ENCODE measurements at regions of chr12 and their contacts with region 1.

Region 1: GRCh38 chr12:108856428-108857157 is 790 bp downstream of the SSH1 start:
- DNase-seq: peak; percentile 77 to 93
- H3K4me3 ChIP-seq: peak overlapping the region; percentile 69 to 86
- H3K27ac ChIP-seq: peak overlapping the region; percentile 89 to 98
- H3K4me1 ChIP-seq: peaks cover 0 to 65% (median 44%) of the 10 kb centered on the region in 4 donors
- H3K27me3 ChIP-seq: no peaks in the 10 kb centered on the region
- CTCF ChIP-seq: no peak

Region 2: DNA sequence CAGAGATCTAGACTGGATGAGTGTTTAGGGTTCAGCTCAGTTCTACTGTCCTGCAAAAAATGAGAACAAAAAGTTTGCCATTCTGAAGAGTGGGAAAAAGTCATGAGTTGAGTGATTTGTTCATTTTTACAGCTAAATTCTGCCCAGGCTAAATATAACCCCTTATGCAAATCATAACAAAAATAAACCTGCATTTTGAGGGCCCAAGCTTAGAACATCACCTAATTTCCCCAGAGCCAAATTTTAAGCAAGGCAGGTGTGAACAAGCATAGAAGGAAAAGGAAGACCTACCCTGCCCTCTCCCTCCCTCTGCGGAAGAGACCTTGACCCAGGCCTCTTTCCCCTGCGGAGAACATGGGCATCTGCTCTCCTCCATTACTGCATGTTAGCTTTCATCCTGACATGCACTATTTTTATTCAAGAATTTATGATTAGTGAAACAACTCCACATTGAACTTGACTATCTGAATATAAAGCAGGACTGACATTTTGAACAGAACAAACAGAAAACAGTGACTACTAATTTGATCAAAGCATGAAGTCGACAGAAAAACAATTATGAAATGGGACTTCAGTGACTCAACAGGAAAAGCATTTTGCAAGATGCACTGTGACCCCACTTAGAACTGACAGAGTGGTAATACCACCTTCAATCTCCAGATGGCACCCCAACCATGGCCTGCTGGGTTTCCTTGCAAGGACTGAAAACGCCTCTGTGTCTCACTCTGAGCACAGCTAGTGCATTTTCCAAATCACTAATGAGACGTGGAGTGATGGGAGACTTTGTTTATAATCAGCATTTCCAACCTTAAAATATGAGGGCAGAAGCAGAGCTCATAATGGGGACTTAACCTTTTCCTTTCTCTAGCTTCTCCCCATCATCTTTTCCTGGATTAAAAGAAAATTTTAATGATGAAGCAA is 192.0 kb before region 1 on chr12:
- intact Hi-C with region 1: loop called (anchors 2 kb)
- DNase-seq: peak; percentile 93 to 94
- H3K4me3 ChIP-seq: peak overlapping the region in 1 of 2 donors; percentile 20
- H3K27ac ChIP-seq: peak overlapping the region; percentile 73 to 77
- H3K4me1 ChIP-seq: peaks cover 6 to 79% (median 55%) of the 10 kb centered on the region in 4 donors
- H3K27me3 ChIP-seq: no peaks in the 10 kb centered on the region
- CTCF ChIP-seq: peak; percentile 94 to 97